IMR-90 (cell line): ENCODE measurements at regions of chr2 and their contacts with region 1.

Region 1: DNA sequence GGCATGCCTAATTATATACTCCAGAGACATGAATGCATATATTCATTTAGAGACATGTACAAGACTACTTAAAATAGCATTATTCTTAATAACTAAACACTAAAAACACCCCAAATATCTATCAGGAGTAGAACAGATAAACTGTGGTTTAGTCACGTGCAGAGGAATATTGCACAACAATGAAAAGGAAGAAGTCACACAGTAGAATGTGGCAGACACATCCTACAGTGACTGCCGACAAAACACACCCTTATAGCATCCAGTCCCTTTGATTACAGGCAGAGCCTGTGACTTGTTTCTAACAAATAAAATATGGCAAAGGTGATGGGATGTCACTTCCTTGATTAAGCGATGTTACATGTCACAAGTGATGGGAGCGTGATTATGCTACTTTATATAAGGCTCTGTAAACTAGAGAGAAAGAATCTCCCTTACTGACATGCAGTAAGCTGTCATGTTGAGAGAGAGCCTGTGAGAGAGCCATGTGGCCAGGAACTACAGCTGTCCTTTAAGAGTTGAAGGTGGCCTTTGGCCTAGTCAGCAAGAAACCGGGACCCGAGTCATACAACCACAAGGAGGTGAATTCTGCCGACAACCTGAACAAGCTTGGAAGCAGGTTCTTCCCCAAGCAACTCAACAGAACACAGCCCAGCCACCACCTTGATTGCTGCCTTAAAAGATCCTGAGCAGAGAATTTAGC is 39.1 kb upstream of the LGALSL start:
- DNase-seq: no peak
- ATAC-seq: no peak
- H3K4me3 ChIP-seq: no peak overlapping the region
- H3K27ac ChIP-seq: no peak overlapping the region
- H3K4me1 ChIP-seq: no peaks in the 10 kb centered on the region
- H3K27me3 ChIP-seq: peaks cover 48% of the 10 kb centered on the region
- CTCF ChIP-seq: no peak
- POLR2A ChIP-seq: no peak
- RAD21 ChIP-seq: no peak

Region 2: DNA sequence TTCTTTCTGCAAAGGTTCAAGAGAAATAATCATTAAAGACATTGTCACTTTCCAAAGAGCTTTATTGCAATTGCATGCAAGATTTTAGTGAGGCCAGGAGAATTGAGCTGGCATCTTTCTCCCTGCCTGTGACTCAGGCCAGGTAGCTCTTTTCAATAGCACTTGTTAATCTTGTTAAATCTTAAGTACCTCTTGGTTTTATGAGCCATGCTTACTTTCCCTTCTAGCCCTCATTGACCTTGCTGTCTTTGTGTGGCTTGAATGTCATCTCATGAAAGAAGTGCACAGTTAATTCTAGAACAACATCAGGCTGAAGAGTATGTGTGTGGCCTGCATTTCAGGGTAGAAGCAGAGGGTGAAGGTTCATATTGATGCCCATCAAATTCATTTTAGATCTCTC is 24.3 kb after region 1 on chr2:
- CTCF ChIA-PET with region 1: no interaction called
- POLR2A ChIA-PET with region 1: no interaction called
- dilution Hi-C with region 1: no loop called
- in situ Hi-C with region 1: no loop called
- intact Hi-C with region 1: no loop called
- DNase-seq: no peak
- ATAC-seq: no peak
- H3K4me3 ChIP-seq: no peak overlapping the region
- H3K27ac ChIP-seq: no peak overlapping the region
- H3K4me1 ChIP-seq: no peaks in the 10 kb centered on the region
- H3K27me3 ChIP-seq: peaks cover 35% of the 10 kb centered on the region
- CTCF ChIP-seq: no peak
- POLR2A ChIP-seq: no peak
- RAD21 ChIP-seq: no peak

Region 3: DNA sequence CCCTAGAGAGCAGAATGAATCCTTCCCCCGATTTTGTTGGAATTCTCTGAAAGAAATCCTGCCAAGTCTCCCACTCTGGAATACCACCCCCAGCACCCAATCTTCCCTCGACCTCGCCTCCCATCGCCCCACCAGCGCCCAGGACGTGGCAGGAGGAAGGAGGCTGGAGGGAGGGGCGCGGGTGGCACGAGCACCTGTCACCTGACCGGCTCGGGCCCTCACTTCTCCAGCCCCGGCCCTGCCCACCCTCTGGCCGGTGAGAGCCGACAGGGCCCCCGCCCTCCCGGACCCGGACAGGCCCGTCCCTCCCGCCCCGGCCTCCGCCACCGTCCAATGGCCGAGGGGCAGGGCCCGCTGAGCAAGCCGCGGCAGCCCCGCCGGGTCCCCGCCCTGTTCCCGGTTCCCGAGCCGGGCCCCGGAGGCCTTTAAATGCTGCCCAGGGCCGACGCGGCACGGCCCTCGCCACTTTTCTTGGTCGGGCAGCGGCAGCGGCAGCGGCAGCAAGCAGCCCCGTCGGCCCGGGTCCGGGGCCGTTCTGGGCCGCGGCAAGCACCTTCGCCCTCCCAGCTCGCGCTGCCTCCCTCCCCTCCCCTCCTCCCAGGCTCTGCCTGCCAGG is 39.0 kb after region 1 on chr2 and contains the start of gene LGALSL:
- CTCF ChIA-PET with region 1: no interaction called
- POLR2A ChIA-PET with region 1: interaction called, 10 read pairs
- dilution Hi-C with region 1: no loop called
- in situ Hi-C with region 1: no loop called
- intact Hi-C with region 1: no loop called
- DNase-seq: peak; percentile 24
- ATAC-seq: peak; percentile 89
- H3K4me3 ChIP-seq: peak within 1 kb of the TSS; percentile 69
- H3K27ac ChIP-seq: no peak within 1 kb of the TSS; the same call in 1 of the 2 replicates
- H3K4me1 ChIP-seq: peaks cover 2% of the 10 kb centered on the region; the same call in 1 of the 2 replicates
- H3K27me3 ChIP-seq: peaks cover 13% of the 10 kb centered on the region
- CTCF ChIP-seq: no peak
- POLR2A ChIP-seq: no peak
- RAD21 ChIP-seq: no peak
- total RNA-seq, gene LGALSL: 1.7 and 2.9 TPM in 2 replicates